PC-9 (cell line): ENCODE measurements at regions of chr4 and their contacts with region 1.

Region 1: GRCh38 chr4:155566354-155566753 is 100.3 kb upstream of the GUCY1A1 start:
- DNase-seq: no peak
- H3K4me3 ChIP-seq: no peak overlapping the region
- H3K27ac ChIP-seq: no peak overlapping the region
- H3K4me1 ChIP-seq: no peaks in the 10 kb centered on the region
- H3K27me3 ChIP-seq: no peaks in the 10 kb centered on the region
- CTCF ChIP-seq: no peak

Region 2: DNA sequence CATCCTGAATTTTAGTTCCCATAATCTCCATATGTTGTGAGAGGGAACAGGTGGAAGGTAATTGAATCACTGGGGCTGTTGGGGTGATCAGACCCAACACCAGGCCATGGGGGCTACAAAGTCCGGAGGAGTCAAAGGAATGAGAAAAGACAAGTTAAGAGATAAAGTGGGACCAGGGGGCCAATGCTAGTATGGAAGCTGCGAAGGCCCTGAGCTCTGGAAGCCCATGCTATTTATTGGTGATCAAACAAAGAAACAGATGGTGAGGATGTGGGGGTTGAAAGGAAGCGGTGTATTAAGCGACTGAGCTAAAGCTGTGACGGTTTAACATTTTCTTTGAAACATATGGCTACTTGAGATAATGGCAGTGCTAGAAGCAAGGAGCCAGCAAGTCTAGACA is 1272.4 kb after region 1 on chr4:
- CTCF ChIA-PET with region 1: no interaction called
- POLR2A ChIA-PET with region 1: interaction called, 10 read pairs
- intact Hi-C with region 1: no loop called
- DNase-seq: no peak
- H3K4me3 ChIP-seq: no peak overlapping the region
- H3K27ac ChIP-seq: no peak overlapping the region
- H3K4me1 ChIP-seq: no peaks in the 10 kb centered on the region
- H3K27me3 ChIP-seq: no peaks in the 10 kb centered on the region
- CTCF ChIP-seq: no peak